GM12878 (cell line): ENCODE measurements at regions of chr2 and their contacts with region 1.

Region 1: GRCh38 chr2:190947711-190948251 is 66.2 kb downstream of the STAT1 start:
- DNase-seq: peak; percentile 45
- ATAC-seq: peak; percentile 69
- H3K4me3 ChIP-seq: no peak overlapping the region
- H3K27ac ChIP-seq: 0 out of 2 replicates have a peak overlapping the region, but pooled peaks have one; percentile 27
- H3K4me1 ChIP-seq: peaks cover 8% of the 10 kb centered on the region; the same call in 1 of the 2 replicates
- H3K27me3 ChIP-seq: no peaks in the 10 kb centered on the region
- CTCF ChIP-seq: peak; percentile 21 to 53 (median 34); a peak in 4 of 6 replicates
- EP300 ChIP-seq: no peak
- POLR2A ChIP-seq: no peak
- RAD21 ChIP-seq: peak; percentile 66

Region 2: DNA sequence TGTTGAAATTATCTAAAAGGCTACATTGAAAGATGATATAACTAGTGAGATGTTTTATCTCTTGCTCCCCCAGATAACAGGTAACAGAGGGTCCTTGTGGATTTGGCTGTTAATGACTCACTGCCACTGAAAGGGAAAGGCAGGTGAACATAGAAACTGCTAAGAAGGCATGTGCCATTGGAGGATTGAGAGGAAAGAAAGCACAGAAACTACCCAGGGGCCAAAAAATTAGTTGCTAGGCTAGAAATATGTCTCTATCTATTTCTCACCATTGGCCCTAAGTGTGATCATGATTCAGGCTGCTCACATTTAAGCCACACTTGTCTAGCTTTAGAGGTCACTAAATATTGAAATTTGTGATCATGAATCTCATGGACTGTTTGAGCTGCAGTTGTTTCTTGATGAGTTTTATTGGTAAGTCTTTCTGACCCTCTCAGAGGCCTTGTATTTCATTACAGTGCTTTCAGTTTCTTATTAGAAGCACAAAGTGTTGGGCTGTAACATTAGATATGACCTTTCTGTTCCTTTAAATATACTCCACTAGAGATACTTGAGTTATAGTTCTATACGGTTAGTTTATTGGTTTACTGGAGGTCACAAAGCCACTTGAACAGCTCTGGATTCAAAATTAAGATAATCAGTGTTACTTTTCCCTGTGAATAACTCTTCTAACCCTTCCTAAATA is 272.7 kb before region 1 on chr2:
- CTCF ChIA-PET with region 1: no interaction called
- POLR2A ChIA-PET with region 1: no interaction called
- RAD21 ChIA-PET with region 1: no interaction called
- SMC1A ChIA-PET with region 1: no interaction called
- in situ Hi-C with region 1: no loop called
- intact Hi-C with region 1: no loop called
- DNase-seq: peak; percentile 51
- ATAC-seq: peak; percentile 49
- H3K4me3 ChIP-seq: peak overlapping the region; percentile 37; the same call in 1 of the 2 replicates
- H3K27ac ChIP-seq: peak overlapping the region; percentile 92
- H3K4me1 ChIP-seq: peaks cover 59% of the 10 kb centered on the region
- H3K27me3 ChIP-seq: no peaks in the 10 kb centered on the region
- CTCF ChIP-seq: no peak
- EP300 ChIP-seq: peak in 1 of 2 experiments; percentile 46; a peak in 1 of 4 replicates
- POLR2A ChIP-seq: no peak
- RAD21 ChIP-seq: no peak

Region 3: GRCh38 chr2:190755772-190756415 is 191.9 kb before region 1 on chr2:
- CTCF ChIA-PET with region 1: no interaction called
- POLR2A ChIA-PET with region 1: no interaction called
- RAD21 ChIA-PET with region 1: no interaction called
- SMC1A ChIA-PET with region 1: no interaction called
- in situ Hi-C with region 1: no loop called
- intact Hi-C with region 1: no loop called
- DNase-seq: no peak
- ATAC-seq: no peak
- H3K4me3 ChIP-seq: no peak overlapping the region
- H3K27ac ChIP-seq: no peak overlapping the region
- H3K4me1 ChIP-seq: no peaks in the 10 kb centered on the region
- H3K27me3 ChIP-seq: no peaks in the 10 kb centered on the region
- CTCF ChIP-seq: no peak
- EP300 ChIP-seq: no peak
- POLR2A ChIP-seq: no peak
- RAD21 ChIP-seq: no peak

Region 4: GRCh38 chr2:190860985-190861680 is 86.6 kb before region 1 on chr2:
- CTCF ChIA-PET with region 1: no interaction called
- POLR2A ChIA-PET with region 1: no interaction called
- RAD21 ChIA-PET with region 1: no interaction called
- SMC1A ChIA-PET with region 1: no interaction called
- in situ Hi-C with region 1: no loop called
- intact Hi-C with region 1: no loop called
- DNase-seq: no peak
- ATAC-seq: no peak
- H3K4me3 ChIP-seq: no peak overlapping the region
- H3K27ac ChIP-seq: no peak overlapping the region
- H3K4me1 ChIP-seq: no peaks in the 10 kb centered on the region
- H3K27me3 ChIP-seq: no peaks in the 10 kb centered on the region
- CTCF ChIP-seq: no peak
- EP300 ChIP-seq: no peak
- POLR2A ChIP-seq: no peak
- RAD21 ChIP-seq: no peak

Region 5: DNA sequence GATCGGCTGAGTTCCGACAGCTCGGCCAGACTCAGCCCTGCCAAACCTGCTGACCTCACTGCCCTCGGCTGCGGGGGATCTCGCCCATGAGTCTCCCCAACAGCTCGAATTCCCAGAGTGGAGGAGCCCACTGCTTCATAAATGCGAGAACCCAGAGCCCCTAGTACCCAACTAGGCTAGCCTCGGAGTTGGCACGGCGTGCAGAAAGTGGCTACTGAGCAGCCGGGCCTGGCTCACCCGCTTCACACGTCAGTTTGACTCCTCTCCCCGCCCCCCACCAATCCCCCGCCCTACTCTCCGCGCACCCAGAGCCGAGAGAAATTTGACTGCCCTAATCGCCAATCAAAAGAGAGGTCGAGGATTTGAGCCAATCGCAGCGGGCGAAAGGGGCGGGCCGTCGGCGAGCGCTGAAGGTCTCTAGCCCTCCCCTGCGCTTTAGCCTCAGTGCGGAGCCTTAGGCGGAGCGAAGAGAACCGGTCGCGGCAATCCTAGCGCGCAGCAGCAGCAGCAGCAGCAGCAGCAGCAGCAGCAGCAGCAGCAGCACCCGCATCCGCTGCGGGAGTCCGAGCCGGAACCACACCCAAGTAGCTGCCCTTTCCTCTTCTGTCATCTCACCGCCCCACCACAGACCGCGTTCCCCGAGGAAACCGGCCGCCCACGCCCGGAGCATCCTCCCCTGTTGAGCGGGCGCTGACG is 67.3 kb before region 1 on chr2 and contains the start of gene GLS:
- CTCF ChIA-PET with region 1: interaction called, 5 read pairs
- POLR2A ChIA-PET with region 1: interaction called, 4 read pairs
- RAD21 ChIA-PET with region 1: interaction called, 7 read pairs
- SMC1A ChIA-PET with region 1: interaction called, 21 read pairs
- in situ Hi-C with region 1: no loop called
- intact Hi-C with region 1: no loop called
- DNase-seq: peak; percentile 86
- ATAC-seq: peak; percentile 83
- H3K4me3 ChIP-seq: peak within 1 kb of the TSS; percentile 94
- H3K27ac ChIP-seq: peak within 1 kb of the TSS; percentile 95
- H3K4me1 ChIP-seq: peaks cover 6% of the 10 kb centered on the region; the same call in 1 of the 2 replicates
- H3K27me3 ChIP-seq: no peaks in the 10 kb centered on the region
- CTCF ChIP-seq: no peak
- EP300 ChIP-seq: 0 out of 4 replicates have a peak, but pooled peaks of 1 of the 2 experiments have one; percentile 20
- POLR2A ChIP-seq: peak; percentile 99
- RAD21 ChIP-seq: no peak
- polyA plus RNA-seq, gene GLS: 23.7 to 30.5 TPM

Region 6: DNA sequence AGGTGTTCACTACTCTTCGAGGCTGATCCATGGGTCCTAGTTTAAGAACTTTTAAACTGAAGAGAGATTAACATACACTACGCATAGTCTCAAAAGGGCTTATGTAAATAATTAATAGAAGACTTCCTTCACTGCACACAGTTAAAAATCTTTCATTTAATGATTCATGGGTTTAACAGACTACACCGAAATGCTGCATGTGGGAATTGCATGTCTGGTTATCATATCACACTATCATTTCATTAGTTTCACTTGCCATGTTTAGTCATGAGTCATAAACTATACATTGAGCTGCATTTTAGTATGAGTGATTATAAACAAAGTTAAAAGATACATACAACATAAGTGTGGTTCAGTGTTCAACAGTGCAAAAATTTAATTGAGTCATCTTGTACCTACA is 36.0 kb before region 1 on chr2:
- CTCF ChIA-PET with region 1: interaction called, 4 read pairs
- POLR2A ChIA-PET with region 1: no interaction called
- RAD21 ChIA-PET with region 1: interaction called, 4 read pairs
- SMC1A ChIA-PET with region 1: interaction called, 12 read pairs
- in situ Hi-C with region 1: no loop called
- intact Hi-C with region 1: no loop called
- DNase-seq: peak; percentile 43
- ATAC-seq: peak; percentile 87
- H3K4me3 ChIP-seq: no peak overlapping the region
- H3K27ac ChIP-seq: peak overlapping the region; percentile 27; the same call in 1 of the 2 replicates
- H3K4me1 ChIP-seq: no peaks in the 10 kb centered on the region
- H3K27me3 ChIP-seq: no peaks in the 10 kb centered on the region
- CTCF ChIP-seq: no peak
- EP300 ChIP-seq: peak; percentile 33 to 42; a peak in 1 of 4 replicates
- POLR2A ChIP-seq: no peak
- RAD21 ChIP-seq: no peak

Region 7: GRCh38 chr2:190961918-190962487 is 14.2 kb after region 1 on chr2:
- CTCF ChIA-PET with region 1: interaction called, 16 read pairs
- POLR2A ChIA-PET with region 1: interaction called, 3 read pairs
- RAD21 ChIA-PET with region 1: interaction called, 6 read pairs
- SMC1A ChIA-PET with region 1: interaction called, 9 read pairs
- in situ Hi-C with region 1: no loop called
- intact Hi-C with region 1: no loop called
- DNase-seq: no peak
- ATAC-seq: peak; percentile 31
- H3K4me3 ChIP-seq: no peak overlapping the region
- H3K27ac ChIP-seq: no peak overlapping the region
- H3K4me1 ChIP-seq: no peaks in the 10 kb centered on the region
- H3K27me3 ChIP-seq: no peaks in the 10 kb centered on the region
- CTCF ChIP-seq: no peak
- EP300 ChIP-seq: no peak
- POLR2A ChIP-seq: peak; percentile 68
- RAD21 ChIP-seq: no peak

Region 8: GRCh38 chr2:190968522-190968921 is 20.7 kb after region 1 on chr2:
- CTCF ChIA-PET with region 1: interaction called, 16 read pairs
- POLR2A ChIA-PET with region 1: interaction called, 5 read pairs
- RAD21 ChIA-PET with region 1: interaction called, 6 read pairs
- SMC1A ChIA-PET with region 1: interaction called, 7 read pairs
- in situ Hi-C with region 1: no loop called
- intact Hi-C with region 1: no loop called
- DNase-seq: no peak
- ATAC-seq: no peak
- H3K4me3 ChIP-seq: no peak overlapping the region
- H3K27ac ChIP-seq: no peak overlapping the region
- H3K4me1 ChIP-seq: no peaks in the 10 kb centered on the region
- H3K27me3 ChIP-seq: no peaks in the 10 kb centered on the region
- CTCF ChIP-seq: no peak
- EP300 ChIP-seq: no peak
- POLR2A ChIP-seq: no peak
- RAD21 ChIP-seq: no peak

Region 9: DNA sequence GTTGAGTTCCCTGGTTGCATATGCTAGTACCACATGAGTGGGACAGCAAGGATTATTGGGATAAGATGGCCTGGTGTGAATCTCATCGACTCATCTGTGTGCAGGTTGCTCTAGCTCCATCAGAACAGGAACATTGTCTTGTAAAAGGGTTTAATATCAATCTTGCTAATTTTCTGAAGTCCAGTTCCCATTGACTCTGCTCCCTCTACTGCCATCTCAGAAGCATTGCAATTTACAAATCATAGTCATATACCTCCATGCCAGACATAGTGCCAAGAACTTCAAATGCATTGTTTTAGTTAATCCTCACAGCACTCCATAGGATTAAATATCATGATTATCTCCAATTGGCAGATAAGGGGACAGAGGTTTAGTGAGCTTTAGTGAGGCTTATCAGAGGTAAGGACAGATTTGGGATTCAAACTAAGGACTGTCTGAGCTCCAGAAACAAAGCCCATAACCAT is 207.9 kb after region 1 on chr2:
- CTCF ChIA-PET with region 1: no interaction called
- POLR2A ChIA-PET with region 1: no interaction called
- RAD21 ChIA-PET with region 1: no interaction called
- SMC1A ChIA-PET with region 1: no interaction called
- in situ Hi-C with region 1: no loop called
- intact Hi-C with region 1: no loop called
- DNase-seq: no peak
- ATAC-seq: peak; percentile 43
- H3K4me3 ChIP-seq: no peak overlapping the region
- H3K27ac ChIP-seq: no peak overlapping the region
- H3K4me1 ChIP-seq: peaks cover 7% of the 10 kb centered on the region
- H3K27me3 ChIP-seq: no peaks in the 10 kb centered on the region; a peak in 1 of 4 replicates
- CTCF ChIP-seq: peak; percentile 64 to 88 (median 74)
- EP300 ChIP-seq: no peak
- POLR2A ChIP-seq: no peak
- RAD21 ChIP-seq: peak; percentile 93